ENCODE measurements at regions of chr11 and their contacts with region 1.

Region 1: GRCh38 chr11:65497141-65498041 is 1.5 kb upstream of the MALAT1 start:
- DNase-seq: peak; percentile 98
- H3K4me3 ChIP-seq: peak overlapping the region; percentile 97
- H3K27ac ChIP-seq: peak overlapping the region; percentile 98
- H3K27me3 ChIP-seq: no peaks in the 10 kb centered on the region
- CTCF ChIP-seq: no peak

Region 2: GRCh38 chr11:65194564-65194963 is 302.8 kb before region 1 on chr11:
- CTCF ChIA-PET with region 1: no interaction called
- POLR2A ChIA-PET with region 1: no interaction called
- DNase-seq: no peak
- H3K4me3 ChIP-seq: no peak overlapping the region
- H3K27ac ChIP-seq: no peak overlapping the region
- H3K27me3 ChIP-seq: no peaks in the 10 kb centered on the region
- CTCF ChIP-seq: no peak

Region 3: GRCh38 chr11:65432686-65433582 is 64.5 kb before region 1 on chr11:
- CTCF ChIA-PET with region 1: no interaction called
- POLR2A ChIA-PET with region 1: interaction called, 999 read pairs
- DNase-seq: no peak
- H3K4me3 ChIP-seq: peak overlapping the region; percentile 14; the same call in 1 of the 2 replicates
- H3K27ac ChIP-seq: no peak overlapping the region
- H3K27me3 ChIP-seq: no peaks in the 10 kb centered on the region
- CTCF ChIP-seq: 0 out of 2 replicates have a peak, but pooled peaks have one; percentile 13

Region 4: DNA sequence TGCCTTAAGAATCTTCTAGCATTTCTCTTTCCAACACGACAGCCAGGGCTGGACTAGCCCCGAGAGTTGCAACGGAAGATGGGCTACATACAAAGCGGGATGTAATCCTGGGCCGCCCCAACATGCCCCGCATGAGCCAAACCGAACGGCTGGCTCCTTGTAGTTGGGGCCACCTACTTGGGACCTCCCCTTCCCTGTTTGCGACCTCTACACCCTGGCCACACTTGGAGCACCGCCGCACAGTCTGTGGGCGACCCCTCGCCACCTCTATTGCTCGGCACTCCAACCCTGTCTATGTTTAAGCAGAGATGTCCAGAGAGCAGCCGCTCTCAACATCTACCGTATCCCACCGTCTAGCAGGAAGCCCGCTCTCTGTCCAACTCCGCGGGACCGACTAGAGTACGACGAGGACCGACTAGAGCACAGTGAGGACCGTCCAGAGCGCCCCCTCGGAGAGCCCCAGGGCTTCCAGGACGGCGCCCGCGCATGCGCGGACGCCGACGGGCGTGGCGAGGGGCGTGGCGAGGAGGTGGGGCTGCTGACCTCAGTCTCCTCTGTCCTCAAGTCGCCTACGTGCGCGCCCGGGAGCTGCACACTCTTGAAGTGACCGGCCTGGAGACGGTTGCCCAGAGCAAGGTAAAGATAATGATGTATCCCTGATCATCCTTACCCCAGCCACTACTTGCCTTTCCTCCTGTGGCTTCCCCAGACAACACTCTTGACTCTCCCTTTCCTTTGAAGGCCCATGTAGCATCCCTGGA is 42.5 kb before region 1 on chr11:
- CTCF ChIA-PET with region 1: interaction called, 4 read pairs
- POLR2A ChIA-PET with region 1: interaction called, 322 read pairs
- DNase-seq: no peak
- H3K4me3 ChIP-seq: peak overlapping the region; percentile 67
- H3K27ac ChIP-seq: peak overlapping the region; percentile 82
- H3K27me3 ChIP-seq: no peaks in the 10 kb centered on the region
- CTCF ChIP-seq: no peak

Region 5: GRCh38 chr11:65477149-65477965 is 20.0 kb before region 1 on chr11:
- CTCF ChIA-PET with region 1: interaction called, 17 read pairs
- POLR2A ChIA-PET with region 1: interaction called, 657 read pairs
- DNase-seq: no peak
- H3K4me3 ChIP-seq: peak overlapping the region; percentile 76
- H3K27ac ChIP-seq: peak overlapping the region; percentile 98
- H3K27me3 ChIP-seq: no peaks in the 10 kb centered on the region
- CTCF ChIP-seq: no peak

Region 6: DNA sequence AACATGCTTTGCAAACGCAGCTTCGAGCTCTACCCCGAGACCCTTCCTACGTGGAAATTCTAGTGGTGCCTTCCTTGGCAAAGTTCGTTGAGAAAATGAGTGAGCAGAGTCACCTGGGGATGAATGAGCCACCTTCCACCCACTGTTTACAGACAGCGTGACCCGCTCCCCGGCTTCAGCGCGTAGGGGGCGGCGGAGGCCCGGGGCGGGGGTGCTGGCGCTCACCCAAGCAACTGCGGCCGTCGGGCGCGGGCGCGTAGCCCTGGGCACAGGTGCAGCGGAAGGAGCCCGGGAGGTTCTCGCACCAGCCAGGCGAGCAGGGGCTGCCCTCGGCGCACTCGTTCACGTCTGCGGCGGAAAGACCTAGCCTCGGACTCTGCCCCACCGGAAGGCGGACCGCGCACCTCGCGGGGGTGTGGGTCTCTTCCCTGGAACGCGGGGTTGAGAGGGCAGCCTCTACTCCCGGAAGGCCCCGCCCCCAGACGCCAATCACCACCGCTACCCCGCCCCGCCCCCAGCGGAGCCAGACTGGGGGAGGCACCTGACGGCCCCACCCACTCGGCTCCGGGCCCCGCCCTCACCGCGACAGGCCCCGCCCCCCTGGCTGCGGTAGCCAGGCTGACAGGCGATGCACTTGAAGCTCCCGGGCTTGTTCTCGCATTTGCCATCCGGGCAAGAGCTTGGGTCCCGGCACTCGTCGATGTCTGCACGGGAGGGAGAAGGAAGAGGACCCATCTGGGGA is 49.0 kb after region 1 on chr11:
- CTCF ChIA-PET with region 1: no interaction called
- POLR2A ChIA-PET with region 1: no interaction called
- DNase-seq: no peak
- H3K4me3 ChIP-seq: no peak overlapping the region
- H3K27ac ChIP-seq: no peak overlapping the region
- H3K27me3 ChIP-seq: no peaks in the 10 kb centered on the region
- CTCF ChIP-seq: no peak